AG04449 (cell line): ENCODE measurements at regions of chr10 and their contacts with region 1.

Region 1: GRCh38 chr10:72048450-72049124 is 39.8 kb downstream of the SPOCK2 start:
- DNase-seq: peak; percentile 53
- H3K4me3 ChIP-seq: no peak overlapping the region
- CTCF ChIP-seq: peak; percentile 98

Region 2: DNA sequence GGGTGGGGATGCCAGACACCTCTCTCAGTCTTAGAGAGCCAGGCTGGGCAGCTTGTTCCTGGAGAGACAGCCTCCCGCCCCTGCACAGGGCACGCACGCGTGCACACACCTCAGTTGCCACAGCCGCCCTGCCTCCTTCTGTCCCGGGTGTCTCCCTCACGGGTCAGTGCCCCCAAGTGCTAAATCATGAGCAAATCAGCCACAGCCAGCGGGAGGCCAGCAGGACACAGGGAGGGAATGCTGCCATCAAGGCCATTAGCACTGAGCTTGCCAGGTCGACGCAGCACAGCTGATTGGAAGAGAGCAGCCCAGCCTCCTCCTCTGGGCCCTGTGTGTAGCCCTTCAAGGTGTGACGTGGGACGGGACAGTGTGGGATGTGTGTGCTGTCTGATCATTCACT is 521.5 kb before region 1 on chr10:
- CTCF ChIA-PET with region 1: no interaction called
- POLR2A ChIA-PET with region 1: no interaction called
- DNase-seq: no peak
- H3K4me3 ChIP-seq: no peak overlapping the region
- CTCF ChIP-seq: no peak

Region 3: DNA sequence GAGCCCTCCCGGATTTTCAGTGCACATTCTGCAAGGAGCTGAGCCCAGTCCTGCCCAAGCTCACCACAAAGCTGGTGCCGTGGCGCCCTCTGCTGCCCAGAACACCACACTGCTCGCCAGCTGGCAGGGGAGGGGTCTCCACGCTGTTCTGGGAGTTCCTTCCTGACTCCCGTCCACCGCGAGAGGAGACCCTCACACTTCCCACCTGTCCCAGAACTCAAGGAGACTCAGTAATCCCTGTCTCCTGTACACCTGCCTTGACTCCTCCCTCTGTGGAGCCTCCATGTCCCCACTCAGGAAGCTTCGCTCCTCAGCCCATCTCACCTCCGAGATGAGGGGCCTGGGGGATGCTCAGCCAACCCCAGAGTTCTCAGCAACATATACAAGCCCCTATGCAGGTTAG is 340.3 kb before region 1 on chr10:
- CTCF ChIA-PET with region 1: no interaction called
- POLR2A ChIA-PET with region 1: no interaction called
- DNase-seq: no peak
- H3K4me3 ChIP-seq: no peak overlapping the region
- CTCF ChIP-seq: peak; percentile 77

Region 4: DNA sequence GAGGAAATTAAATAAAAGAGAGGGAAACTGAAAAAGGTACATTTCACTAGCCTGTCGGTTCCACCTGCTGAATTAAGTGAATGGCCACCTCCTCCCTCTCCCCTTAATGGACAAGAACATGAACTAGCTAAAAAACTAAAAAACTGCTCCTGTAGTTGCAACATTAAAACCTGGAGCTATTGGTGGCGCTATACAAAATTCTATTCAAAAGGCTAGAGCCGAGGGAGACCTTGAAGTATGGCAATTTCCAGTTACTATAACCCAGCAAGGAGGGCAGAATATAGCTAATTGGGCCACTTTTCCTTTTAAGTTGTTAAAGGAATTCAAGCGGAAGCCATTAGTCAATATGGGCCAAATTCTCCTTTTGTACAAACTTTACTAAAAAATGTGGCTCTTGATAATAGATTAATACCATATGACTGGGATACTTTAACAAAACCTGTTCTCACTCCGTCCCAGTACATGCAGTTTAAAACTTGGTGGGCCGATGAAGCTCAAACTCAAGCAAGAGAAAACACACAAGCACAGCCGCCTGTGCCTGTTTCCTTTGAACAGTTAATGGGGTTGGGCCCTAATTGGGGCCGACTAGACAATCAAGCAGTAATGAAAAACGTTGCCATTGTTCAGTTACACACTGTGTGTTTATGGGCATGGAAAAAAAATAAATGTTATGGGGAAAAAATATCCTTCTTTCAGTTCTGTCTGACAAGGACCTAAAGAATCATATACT is 90.9 kb before region 1 on chr10:
- CTCF ChIA-PET with region 1: interaction called, 155 read pairs
- POLR2A ChIA-PET with region 1: interaction called, 3 read pairs
- DNase-seq: no peak
- H3K4me3 ChIP-seq: no peak overlapping the region
- CTCF ChIP-seq: no peak

Region 5: GRCh38 chr10:72009411-72010081 is 39.0 kb before region 1 on chr10:
- CTCF ChIA-PET with region 1: interaction called, 11 read pairs
- POLR2A ChIA-PET with region 1: no interaction called
- DNase-seq: peak; percentile 88
- H3K4me3 ChIP-seq: peak overlapping the region; percentile 23
- CTCF ChIP-seq: no peak

Region 6: GRCh38 chr10:72061491-72061890 is 12.9 kb after region 1 on chr10:
- CTCF ChIA-PET with region 1: interaction called, 96 read pairs
- POLR2A ChIA-PET with region 1: no interaction called
- DNase-seq: no peak
- H3K4me3 ChIP-seq: no peak overlapping the region
- CTCF ChIP-seq: no peak

Region 7: DNA sequence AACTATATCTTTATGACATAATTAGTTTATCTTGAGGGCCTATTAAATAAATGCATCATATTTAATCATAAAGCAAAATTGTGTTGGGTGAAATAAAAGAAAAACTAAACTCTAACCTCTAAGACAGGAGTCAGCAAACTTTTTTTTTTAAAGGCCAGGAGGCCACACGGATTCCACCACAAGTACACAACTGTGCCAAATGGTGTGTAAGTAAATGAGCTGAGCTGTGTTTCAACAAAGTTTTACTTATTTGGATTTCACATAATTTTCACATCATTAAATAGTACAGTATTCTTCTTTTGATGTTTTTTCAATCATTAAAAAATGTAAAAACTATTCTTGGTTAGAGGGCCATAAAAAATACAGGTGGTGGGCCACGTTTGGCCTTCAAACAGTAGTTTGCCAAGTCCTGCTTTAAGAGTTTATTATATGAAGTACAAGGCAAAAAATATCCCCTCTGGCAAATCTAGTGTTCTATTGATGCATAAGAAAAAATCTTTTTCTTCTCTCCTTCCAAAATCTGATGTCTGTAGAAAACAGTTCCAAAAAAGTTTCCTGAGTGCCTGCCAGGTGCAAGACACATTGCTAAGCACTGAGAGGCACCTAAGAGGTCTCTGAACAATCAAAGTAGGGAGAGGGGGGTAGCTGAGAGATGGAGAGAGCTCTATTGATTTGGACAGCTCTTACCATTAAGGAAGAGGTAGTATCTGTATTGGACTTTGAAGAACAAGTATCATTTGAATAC is 66.3 kb after region 1 on chr10:
- CTCF ChIA-PET with region 1: interaction called, 16 read pairs
- POLR2A ChIA-PET with region 1: no interaction called
- DNase-seq: no peak
- H3K4me3 ChIP-seq: no peak overlapping the region
- CTCF ChIP-seq: no peak

Region 8: GRCh38 chr10:72331601-72332422 is 283.2 kb after region 1 on chr10:
- CTCF ChIA-PET with region 1: interaction called, 49 read pairs
- POLR2A ChIA-PET with region 1: no interaction called
- DNase-seq: no peak
- H3K4me3 ChIP-seq: no peak overlapping the region
- CTCF ChIP-seq: peak; percentile 7